PC-3 (cell line): ENCODE measurements at regions of chr1 and their contacts with region 1.

Region 1: DNA sequence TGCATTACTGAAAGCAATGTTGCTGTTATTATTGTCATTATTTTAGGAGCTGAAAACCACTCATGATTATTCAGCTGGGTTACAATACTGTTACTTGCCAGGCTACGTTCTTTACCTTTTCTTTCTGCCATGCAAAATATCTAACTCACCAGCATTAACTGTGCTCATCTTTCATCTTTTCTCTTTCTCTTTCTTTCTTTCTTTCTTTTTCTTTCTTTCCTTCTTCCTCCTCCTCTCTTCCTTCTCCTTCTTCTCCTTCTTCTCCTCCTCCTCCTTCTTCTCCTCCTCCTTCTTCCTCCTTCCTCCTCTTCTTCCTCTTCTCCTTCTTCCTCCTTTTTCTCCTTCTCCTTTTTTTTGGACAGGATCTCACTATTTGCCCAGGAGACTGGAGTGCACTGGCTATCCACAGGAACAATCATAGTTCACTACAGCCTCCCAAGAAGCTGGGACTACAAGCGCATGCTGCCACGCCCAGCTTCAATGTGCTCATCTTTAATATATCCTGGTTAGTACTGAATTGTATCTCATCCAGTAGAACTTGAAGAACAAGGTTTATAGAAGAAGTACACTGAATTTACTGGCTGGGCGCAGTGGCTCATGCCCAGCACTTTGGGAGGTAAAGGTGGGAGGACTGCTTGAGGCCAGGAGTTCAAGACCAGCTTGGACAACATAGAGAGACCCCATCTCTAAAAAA is 7.0 kb upstream of the ZMYM4 start:
- DNase-seq: peak; percentile 56
- ATAC-seq: peak; percentile 23; the same call in 1 of the 2 replicates
- H3K4me3 ChIP-seq: no peak overlapping the region
- H3K27ac ChIP-seq: no peak overlapping the region
- H3K4me1 ChIP-seq: peaks cover 15% of the 10 kb centered on the region
- H3K27me3 ChIP-seq: no peaks in the 10 kb centered on the region
- CTCF ChIP-seq: no peak

Region 2: GRCh38 chr1:35215346-35215745 is 46.2 kb before region 1 on chr1:
- CTCF ChIA-PET with region 1: no interaction called
- POLR2A ChIA-PET with region 1: no interaction called
- intact Hi-C with region 1: no loop called
- DNase-seq: no peak
- ATAC-seq: no peak
- H3K4me3 ChIP-seq: no peak overlapping the region
- H3K27ac ChIP-seq: no peak overlapping the region
- H3K4me1 ChIP-seq: no peaks in the 10 kb centered on the region
- H3K27me3 ChIP-seq: no peaks in the 10 kb centered on the region
- CTCF ChIP-seq: no peak

Region 3: DNA sequence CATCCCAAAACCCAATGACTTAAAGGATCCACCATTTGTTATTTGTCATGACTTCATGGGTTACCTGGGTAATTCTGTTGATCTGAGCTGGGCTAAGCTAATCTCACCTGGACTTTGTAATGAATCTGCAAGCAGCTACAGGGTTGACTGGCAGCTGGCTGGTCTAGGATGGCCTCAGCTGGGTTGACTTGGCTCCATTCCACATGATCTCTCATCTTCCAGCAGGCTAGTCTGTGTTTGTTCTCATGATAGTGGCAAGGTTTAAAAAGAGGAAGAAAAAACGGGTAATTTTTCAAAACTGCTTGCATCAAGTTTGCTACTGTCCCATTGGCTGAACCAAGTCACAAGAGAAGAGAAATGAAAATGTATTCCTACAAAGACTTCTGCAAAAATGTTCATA is 17.9 kb before region 1 on chr1:
- CTCF ChIA-PET with region 1: no interaction called
- POLR2A ChIA-PET with region 1: interaction called, 13 read pairs
- intact Hi-C with region 1: no loop called
- DNase-seq: peak; percentile 6
- ATAC-seq: no peak
- H3K4me3 ChIP-seq: no peak overlapping the region
- H3K27ac ChIP-seq: no peak overlapping the region
- H3K4me1 ChIP-seq: no peaks in the 10 kb centered on the region
- H3K27me3 ChIP-seq: no peaks in the 10 kb centered on the region
- CTCF ChIP-seq: no peak

Region 4: GRCh38 chr1:35324486-35324885 is 62.9 kb after region 1 on chr1:
- CTCF ChIA-PET with region 1: no interaction called
- POLR2A ChIA-PET with region 1: no interaction called
- intact Hi-C with region 1: no loop called
- DNase-seq: no peak
- ATAC-seq: no peak
- H3K4me3 ChIP-seq: no peak overlapping the region
- H3K27ac ChIP-seq: no peak overlapping the region
- H3K4me1 ChIP-seq: no peaks in the 10 kb centered on the region; the same call in 1 of the 2 replicates
- H3K27me3 ChIP-seq: no peaks in the 10 kb centered on the region
- CTCF ChIP-seq: no peak